ENCODE measurements at regions of chrX and their contacts with region 1.

Region 1: DNA sequence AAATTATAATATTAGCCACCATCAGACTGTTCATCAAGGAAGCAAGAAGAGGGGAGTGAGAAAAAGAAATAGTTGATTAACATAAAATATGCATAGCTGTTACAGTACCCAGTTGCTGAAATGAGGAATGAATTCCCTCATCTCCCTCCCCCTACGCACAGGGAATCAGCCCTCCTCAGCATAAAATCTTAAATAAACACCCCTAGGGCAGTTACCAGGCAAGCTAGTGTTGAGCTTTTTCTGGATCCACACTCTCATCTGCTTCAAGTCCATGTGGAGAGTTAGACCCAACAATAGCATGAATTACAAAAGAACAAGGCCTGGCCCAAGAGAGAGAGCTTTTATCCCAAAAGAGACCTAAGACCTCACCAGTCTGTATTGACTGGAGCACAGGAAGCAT is 19.0 kb upstream of the SYTL4 start:
- DNase-seq: no peak
- H3K4me3 ChIP-seq: no peak overlapping the region
- H3K27ac ChIP-seq: no peak overlapping the region
- H3K4me1 ChIP-seq: no peaks in the 10 kb centered on the region
- H3K27me3 ChIP-seq: no peaks in the 10 kb centered on the region
- CTCF ChIP-seq: no peak

Region 2: GRCh38 chrX:100687546-100687945 is 63.3 kb before region 1 on chrX:
- intact Hi-C with region 1: loop called (anchors 5 kb)
- DNase-seq: no peak
- H3K4me3 ChIP-seq: no peak overlapping the region
- H3K27ac ChIP-seq: no peak overlapping the region
- H3K4me1 ChIP-seq: no peaks in the 10 kb centered on the region
- H3K27me3 ChIP-seq: no peaks in the 10 kb centered on the region
- CTCF ChIP-seq: no peak